OCI-LY7 (cell line): ENCODE measurements at regions of chr20 and their contacts with region 1.

Region 1: GRCh38 chr20:8722276-8722928 is 346.5 kb upstream of the PLCB4 start:
- DNase-seq: peak; percentile 76
- H3K4me3 ChIP-seq: no peak overlapping the region
- H3K27ac ChIP-seq: no peak overlapping the region
- H3K4me1 ChIP-seq: peaks cover 7% of the 10 kb centered on the region
- CTCF ChIP-seq: peak; percentile 96

Region 2: GRCh38 chr20:7935027-7935551 is 787.3 kb before region 1 on chr20:
- CTCF ChIA-PET with region 1: interaction called, 6 read pairs
- POLR2A ChIA-PET with region 1: interaction called, 4 read pairs
- intact Hi-C with region 1: loop called (anchors 5 kb)
- DNase-seq: peak; percentile 66
- H3K4me3 ChIP-seq: peak overlapping the region; percentile 26
- H3K27ac ChIP-seq: peak overlapping the region; percentile 24
- H3K4me1 ChIP-seq: peaks cover 31% of the 10 kb centered on the region
- CTCF ChIP-seq: no peak

Region 3: DNA sequence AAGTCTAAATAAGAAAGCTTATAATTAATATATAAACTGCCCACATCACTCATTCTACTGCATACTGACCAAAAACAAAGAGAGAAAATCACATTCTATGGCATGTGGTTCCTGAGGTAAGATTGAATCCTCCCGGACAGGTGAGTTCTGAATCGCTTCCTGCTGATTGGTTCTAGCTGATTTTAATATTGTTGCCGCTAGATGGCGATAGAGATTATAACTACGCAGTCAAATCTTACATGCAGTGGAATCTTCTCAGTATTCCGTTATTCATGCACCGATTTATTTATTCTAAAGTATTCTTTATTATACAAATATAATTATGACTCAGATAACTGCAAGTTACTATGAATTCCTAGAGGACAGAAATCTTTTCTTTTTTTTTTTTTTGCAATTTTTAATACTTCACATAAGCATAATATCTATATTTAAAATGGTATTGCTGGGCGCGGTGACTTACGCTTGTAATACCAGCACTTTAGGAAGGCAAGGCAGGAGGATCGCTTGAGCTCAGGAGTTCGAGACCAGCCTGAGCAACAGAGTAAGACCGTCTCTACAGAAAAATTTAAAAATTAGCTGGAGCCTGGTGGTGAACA is 678.6 kb before region 1 on chr20:
- CTCF ChIA-PET with region 1: interaction called, 13 read pairs
- POLR2A ChIA-PET with region 1: interaction called, 5 read pairs
- intact Hi-C with region 1: loop called (anchors 1 kb)
- DNase-seq: peak; percentile 75
- H3K4me3 ChIP-seq: no peak overlapping the region
- H3K27ac ChIP-seq: no peak overlapping the region
- H3K4me1 ChIP-seq: no peaks in the 10 kb centered on the region
- CTCF ChIP-seq: peak; percentile 91

Region 4: GRCh38 chr20:8305449-8305978 is 416.9 kb before region 1 on chr20:
- CTCF ChIA-PET with region 1: no interaction called
- POLR2A ChIA-PET with region 1: no interaction called
- intact Hi-C with region 1: loop called (anchors 5 kb)
- DNase-seq: peak; percentile 86
- H3K4me3 ChIP-seq: no peak overlapping the region
- H3K27ac ChIP-seq: no peak overlapping the region
- H3K4me1 ChIP-seq: peaks cover 7% of the 10 kb centered on the region
- CTCF ChIP-seq: peak; percentile 93

Region 5: GRCh38 chr20:8454137-8454712 is 268.2 kb before region 1 on chr20:
- CTCF ChIA-PET with region 1: no interaction called
- POLR2A ChIA-PET with region 1: no interaction called
- intact Hi-C with region 1: loop called (anchors 5 kb)
- DNase-seq: peak; percentile 53
- H3K4me3 ChIP-seq: no peak overlapping the region
- H3K27ac ChIP-seq: no peak overlapping the region
- H3K4me1 ChIP-seq: peaks cover 6% of the 10 kb centered on the region
- CTCF ChIP-seq: peak; percentile 71

Region 6: DNA sequence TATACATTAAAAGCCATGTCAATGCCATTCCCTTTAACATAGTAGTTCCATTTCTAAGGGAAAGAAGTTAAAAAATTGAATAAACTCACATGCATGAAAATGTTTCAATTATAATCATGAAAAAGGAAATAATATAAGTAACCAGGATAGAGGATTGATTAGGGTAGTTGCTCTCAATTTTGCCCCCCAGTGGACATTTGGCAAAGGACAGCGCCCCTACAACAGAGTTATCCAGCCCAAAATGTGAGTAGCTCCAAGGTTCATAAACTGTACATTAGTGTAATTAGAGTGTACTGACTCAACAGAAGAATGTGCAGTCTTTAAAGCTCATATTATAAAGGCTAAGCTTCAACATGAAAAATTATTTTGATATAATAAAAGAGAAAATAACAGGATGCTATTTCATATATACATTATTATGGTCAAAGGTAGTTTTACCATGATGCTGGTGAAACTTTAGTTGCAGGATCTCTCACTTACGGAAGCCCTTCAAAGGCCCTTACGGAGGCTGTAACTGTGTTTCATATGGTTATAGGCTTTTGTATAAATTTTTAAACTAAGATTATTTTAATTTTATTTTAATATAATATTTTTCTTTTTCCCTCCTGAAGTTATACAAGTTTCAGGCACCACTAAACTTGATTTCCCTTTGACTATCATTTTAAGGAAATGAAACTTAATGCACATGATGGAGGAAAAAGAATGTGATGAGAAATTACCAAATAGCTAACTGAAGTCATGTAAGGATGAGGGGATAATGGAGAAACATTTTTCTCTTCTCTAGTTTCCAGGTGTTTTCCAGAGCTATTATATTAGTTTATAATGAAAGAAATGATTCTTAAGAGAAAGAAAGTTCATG is 186.8 kb before region 1 on chr20:
- CTCF ChIA-PET with region 1: interaction called, 3 read pairs
- POLR2A ChIA-PET with region 1: no interaction called
- intact Hi-C with region 1: loop called (anchors 2 kb)
- DNase-seq: peak; percentile 69
- H3K4me3 ChIP-seq: peak overlapping the region; percentile 72
- H3K27ac ChIP-seq: peak overlapping the region; percentile 93
- H3K4me1 ChIP-seq: peaks cover 89% of the 10 kb centered on the region
- CTCF ChIP-seq: peak; percentile 95

Region 7: GRCh38 chr20:8646033-8646441 is 76.4 kb before region 1 on chr20:
- CTCF ChIA-PET with region 1: no interaction called
- POLR2A ChIA-PET with region 1: no interaction called
- intact Hi-C with region 1: no loop called
- DNase-seq: no peak
- H3K4me3 ChIP-seq: no peak overlapping the region
- H3K27ac ChIP-seq: no peak overlapping the region
- H3K4me1 ChIP-seq: peaks cover 10% of the 10 kb centered on the region
- CTCF ChIP-seq: no peak